BJ (cell line): ENCODE measurements at regions of chr11 and their contacts with region 1.

Region 1: GRCh38 chr11:100753172-100753543 is 66.1 kb downstream of the ARHGAP42 start:
- DNase-seq: no peak
- H3K4me3 ChIP-seq: no peak overlapping the region
- H3K27me3 ChIP-seq: no peaks in the 10 kb centered on the region
- CTCF ChIP-seq: no peak

Region 2: DNA sequence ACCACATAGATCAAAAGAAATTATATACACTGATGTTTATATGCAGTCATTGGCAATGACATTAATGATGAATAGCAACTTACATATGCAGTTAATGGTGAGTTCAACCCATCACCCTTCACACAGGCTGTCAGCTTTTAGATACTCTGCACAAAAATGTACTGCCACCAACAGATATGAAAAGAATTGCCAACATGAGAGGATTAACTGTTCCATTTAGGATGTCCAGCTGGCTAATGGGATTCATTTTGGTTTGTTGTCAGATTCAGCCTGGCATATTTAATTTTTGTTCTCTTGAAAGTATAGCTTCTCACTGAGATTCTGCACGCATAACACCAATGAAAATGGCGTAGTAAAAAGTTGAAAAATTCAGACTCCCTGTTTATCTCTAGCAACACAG is 620.0 kb before region 1 on chr11:
- CTCF ChIA-PET with region 1: no interaction called
- POLR2A ChIA-PET with region 1: no interaction called
- DNase-seq: no peak
- H3K4me3 ChIP-seq: no peak overlapping the region
- H3K27me3 ChIP-seq: no peaks in the 10 kb centered on the region
- CTCF ChIP-seq: no peak

Region 3: GRCh38 chr11:101996111-101996510 is 1243.0 kb after region 1 on chr11:
- CTCF ChIA-PET with region 1: no interaction called
- POLR2A ChIA-PET with region 1: interaction called, 10 read pairs
- DNase-seq: no peak
- H3K4me3 ChIP-seq: no peak overlapping the region
- H3K27me3 ChIP-seq: no peaks in the 10 kb centered on the region
- CTCF ChIP-seq: no peak